ENCODE measurements at regions of chr13 and their contacts with region 1.

Region 1: DNA sequence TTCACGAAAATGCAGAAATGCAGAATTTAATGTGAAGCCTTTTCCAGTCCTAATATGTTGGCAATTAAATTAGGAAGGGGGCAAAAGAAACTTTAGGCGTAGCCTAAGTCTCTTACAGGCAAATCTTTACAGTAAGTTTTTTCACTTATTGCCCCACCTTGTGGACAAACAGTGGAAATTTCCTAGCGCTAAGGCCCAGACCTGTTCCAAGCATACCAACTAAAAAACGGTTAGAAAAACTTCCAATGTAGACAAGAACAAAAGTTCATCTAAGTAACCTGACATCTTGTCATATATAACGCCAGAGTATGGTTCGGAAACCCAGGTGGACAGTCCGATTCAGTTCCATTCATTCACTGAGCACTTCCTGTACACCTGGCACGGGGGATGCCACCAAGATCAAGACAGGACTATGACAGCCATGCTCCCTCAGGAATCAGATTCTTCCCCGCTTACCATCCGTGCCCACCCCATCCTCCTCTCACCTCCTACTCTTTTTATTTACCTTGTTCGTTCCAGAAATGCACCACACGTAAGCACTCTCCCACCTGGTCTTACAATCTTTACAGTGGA is 4.9 kb downstream of the ZAR1L start:
- DNase-seq: no peak
- ATAC-seq: peak; percentile 72 to 75
- H3K4me3 ChIP-seq: peak overlapping the region; percentile 62
- H3K27ac ChIP-seq: peak overlapping the region; percentile 26
- H3K4me1 ChIP-seq: peaks cover 7% of the 10 kb centered on the region
- H3K27me3 ChIP-seq: no peaks in the 10 kb centered on the region

Region 2: DNA sequence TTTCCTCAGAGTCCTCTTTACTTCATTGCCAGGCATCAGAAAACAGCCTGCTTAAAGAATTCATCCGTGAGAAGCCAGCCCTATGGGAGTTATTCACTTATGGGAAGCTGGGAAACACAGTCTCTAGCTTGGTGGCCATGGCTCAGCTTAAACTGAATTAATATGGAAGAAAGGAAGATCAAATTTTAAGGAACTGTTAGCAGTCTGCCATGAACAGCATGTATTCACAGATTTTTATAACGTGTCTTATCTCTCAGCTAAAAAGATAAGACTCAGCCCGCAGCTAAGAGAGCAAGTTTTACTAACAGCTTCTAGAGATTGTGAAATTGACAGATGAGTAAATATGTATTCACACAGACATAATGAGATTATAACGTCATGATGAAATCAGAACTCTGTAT is 824.6 kb before region 1 on chr13:
- intact Hi-C with region 1: no loop called
- DNase-seq: no peak
- ATAC-seq: peak; percentile 43 to 64
- H3K4me3 ChIP-seq: no peak overlapping the region
- H3K27ac ChIP-seq: no peak overlapping the region
- H3K4me1 ChIP-seq: no peaks in the 10 kb centered on the region
- H3K27me3 ChIP-seq: no peaks in the 10 kb centered on the region

Region 3: DNA sequence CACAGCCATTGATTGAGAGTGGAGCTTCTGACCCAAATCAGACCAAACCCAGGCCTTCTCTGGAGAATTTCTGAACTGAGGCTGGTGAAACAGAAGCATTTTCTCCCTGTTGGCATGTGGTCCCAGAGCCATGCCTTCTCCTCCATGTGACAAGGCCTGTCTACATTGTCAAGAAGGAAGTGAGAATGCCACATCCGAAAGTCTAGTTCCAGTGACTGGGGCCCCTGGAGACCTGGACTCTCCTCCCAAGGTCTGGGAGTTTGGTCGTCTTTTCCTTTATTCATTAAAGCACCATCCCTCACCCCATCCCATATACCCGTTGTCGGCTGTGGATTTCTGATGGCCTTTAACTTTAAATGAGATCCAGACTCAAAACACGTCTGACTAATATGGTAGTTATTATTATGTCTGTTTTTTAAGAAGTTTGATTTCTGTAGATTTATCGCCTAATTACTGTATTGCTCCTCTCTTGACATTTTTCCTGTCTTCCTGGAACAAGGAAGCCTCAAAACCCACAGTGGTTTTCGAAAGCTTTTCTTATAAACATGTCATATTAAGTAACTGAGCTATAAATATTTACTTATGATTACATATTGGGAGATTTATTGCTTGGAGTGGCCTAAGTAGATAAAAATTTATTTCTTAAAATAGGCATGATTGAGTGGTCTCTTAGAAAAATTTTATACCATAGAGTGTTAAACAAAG is 407.0 kb before region 1 on chr13:
- intact Hi-C with region 1: loop called in 2 of 4 experiments (anchors 5 kb)
- DNase-seq: no peak
- ATAC-seq: no peak
- H3K4me3 ChIP-seq: no peak overlapping the region
- H3K27ac ChIP-seq: no peak overlapping the region
- H3K4me1 ChIP-seq: peaks cover 6% of the 10 kb centered on the region
- H3K27me3 ChIP-seq: no peaks in the 10 kb centered on the region

Region 4: DNA sequence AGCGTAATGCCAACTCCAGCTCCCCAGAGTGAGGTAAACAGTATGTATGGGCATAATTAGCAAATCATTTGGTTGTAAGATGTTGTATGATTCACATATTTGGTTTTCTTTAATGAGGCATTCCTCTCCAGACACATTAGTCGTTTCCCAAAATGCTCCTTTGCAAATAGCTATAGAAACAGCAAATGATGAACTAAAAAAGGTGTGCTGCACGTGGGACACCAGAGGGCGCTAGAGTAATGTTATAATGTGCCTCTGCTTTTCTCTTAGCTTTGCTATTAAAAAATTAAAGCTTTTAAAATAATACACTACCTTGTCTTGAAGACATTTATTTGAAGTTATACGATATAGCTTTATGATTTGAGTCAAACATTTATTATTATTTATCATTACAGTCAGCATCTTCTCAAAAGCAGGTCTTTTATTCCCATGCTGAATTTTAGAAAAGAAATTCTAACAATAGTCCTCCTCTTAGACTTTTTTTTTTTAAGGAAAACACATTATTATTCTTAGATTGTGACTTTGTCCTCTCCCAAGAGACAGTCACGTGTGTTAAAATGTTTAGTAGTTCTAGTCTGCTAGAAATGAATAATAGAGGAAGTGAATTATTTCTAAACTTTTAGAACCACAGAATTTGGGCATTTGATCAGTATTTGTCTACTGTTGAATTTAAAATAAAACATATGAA is 400.2 kb before region 1 on chr13:
- intact Hi-C with region 1: loop called (anchors 5 to 10 kb)
- DNase-seq: peak in 1 of 3 donors; percentile 25
- ATAC-seq: peak; percentile 27 to 64
- H3K4me3 ChIP-seq: no peak overlapping the region
- H3K27ac ChIP-seq: no peak overlapping the region
- H3K4me1 ChIP-seq: peaks cover 2% of the 10 kb centered on the region
- H3K27me3 ChIP-seq: no peaks in the 10 kb centered on the region

Region 5: DNA sequence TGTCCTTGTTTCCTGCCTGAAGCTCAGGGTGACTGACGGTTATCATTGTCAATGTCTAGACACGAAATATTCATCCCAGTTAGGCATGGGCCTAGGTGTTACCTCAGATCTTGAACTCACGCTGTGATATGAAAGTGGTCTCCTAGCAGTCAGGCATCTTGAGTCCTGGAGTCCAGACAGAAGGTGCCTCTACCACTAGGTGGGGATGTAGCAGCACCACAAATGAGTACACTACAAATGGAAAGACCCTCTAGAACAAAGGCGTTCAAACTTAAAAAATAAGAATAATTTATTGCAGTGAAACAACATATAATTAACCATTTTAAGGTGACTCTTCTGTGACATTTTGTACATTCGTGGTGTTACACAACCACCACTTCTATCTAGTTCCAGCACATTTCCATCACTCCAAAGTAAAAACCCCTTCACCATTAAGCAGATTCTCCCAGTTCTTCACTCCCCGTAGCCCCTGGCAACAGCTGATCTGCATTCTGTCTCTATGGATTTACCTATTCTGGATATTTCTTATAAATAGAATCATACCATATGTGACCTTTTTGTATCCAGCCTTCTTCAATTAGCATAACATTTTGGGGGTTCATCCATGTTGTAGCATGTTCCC is 290.5 kb before region 1 on chr13:
- intact Hi-C with region 1: loop called in 2 of 4 experiments (anchors 5 to 10 kb)
- DNase-seq: peak in 2 of 3 donors; percentile 27 to 42
- ATAC-seq: peak; percentile 61 to 71
- H3K4me3 ChIP-seq: no peak overlapping the region
- H3K27ac ChIP-seq: no peak overlapping the region
- H3K4me1 ChIP-seq: peaks cover 9% of the 10 kb centered on the region
- H3K27me3 ChIP-seq: no peaks in the 10 kb centered on the region

Region 6: DNA sequence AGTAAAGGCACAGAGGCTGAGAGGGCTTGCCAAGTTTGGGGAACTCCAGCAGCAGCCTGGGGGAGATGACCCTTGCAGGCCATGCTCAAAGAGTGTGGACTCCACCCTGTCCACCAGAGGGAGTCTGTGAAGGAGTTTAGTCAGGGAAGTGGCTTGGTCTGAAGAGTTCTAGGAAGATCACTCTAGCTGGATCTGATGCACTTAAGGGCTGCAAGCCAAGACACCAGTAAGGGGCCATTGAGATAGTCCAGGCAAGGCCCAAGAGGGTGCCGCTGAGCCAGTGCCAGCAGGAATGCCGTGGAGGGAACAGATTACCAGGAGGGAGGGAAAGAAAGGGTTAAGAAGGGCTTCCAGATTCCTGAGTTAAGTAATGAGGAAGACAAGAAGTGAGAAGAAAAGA is 63.8 kb before region 1 on chr13:
- intact Hi-C with region 1: loop called in 3 of 4 experiments (anchors 2 to 5 kb)
- DNase-seq: peak; percentile 63 to 80 (median 74)
- ATAC-seq: peak; percentile 87 to 94
- H3K4me3 ChIP-seq: no peak overlapping the region
- H3K27ac ChIP-seq: peak overlapping the region; percentile 14
- H3K4me1 ChIP-seq: peaks cover 3% of the 10 kb centered on the region
- H3K27me3 ChIP-seq: no peaks in the 10 kb centered on the region

Region 7: GRCh38 chr13:32253911-32254399 is 56.3 kb before region 1 on chr13:
- intact Hi-C with region 1: loop called in 2 of 4 experiments (anchors 5 kb)
- DNase-seq: no peak
- ATAC-seq: peak; percentile 56 to 85
- H3K4me3 ChIP-seq: peak overlapping the region; percentile 48
- H3K27ac ChIP-seq: peak overlapping the region; percentile 97
- H3K4me1 ChIP-seq: peaks cover 5% of the 10 kb centered on the region
- H3K27me3 ChIP-seq: no peaks in the 10 kb centered on the region

Measured in right cardiac atrium (tissue), 5 donors.